CD8-positive, alpha-beta T cell (primary cell): ENCODE measurements at regions of chr6 and their contacts with region 1.

Region 1: DNA sequence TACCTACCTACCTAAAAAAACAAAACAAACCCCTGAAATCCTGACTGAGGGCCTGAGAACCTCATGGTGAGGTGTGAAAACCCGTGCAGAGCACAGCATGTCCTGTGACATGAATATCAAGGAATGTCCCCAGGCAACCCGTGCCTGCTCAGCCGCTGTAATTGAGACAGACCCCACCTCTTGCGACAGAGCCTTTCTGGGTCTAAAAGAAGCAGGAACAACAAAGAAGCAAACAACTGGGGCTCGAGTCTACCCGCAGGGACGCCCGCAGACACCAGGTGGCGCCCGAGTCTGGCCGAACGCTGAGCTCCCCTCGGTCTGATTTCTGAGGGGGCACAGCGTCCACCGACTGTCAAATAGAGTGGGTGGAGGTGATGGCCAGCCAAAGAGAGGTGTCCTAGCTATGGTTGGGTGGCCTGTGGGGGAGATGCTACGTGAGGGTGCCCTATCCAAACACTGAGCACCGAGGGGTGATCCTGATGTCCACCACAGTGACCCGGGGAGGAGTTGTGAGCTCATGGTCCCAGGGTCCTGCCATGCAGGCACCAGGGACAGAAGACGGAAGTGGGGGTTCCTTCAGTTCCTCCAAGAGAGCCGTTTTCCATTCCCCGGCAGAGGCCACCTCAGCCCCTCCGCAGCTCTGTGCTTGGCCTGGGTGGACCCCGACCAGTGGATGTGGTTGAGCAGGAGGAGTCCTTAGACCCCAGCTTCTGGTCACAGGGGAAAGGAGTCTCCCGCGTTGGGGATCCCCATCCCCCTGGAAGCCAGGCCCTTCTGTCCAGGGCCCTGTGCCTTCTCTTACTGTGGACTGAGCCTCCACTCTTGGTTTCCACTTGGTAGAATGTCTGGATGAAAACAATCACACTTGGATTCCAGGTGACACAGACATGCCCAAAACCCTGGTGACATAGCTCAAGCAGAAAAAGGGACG is 268.2 kb downstream of the CDC5L start:
- DNase-seq: peak; percentile 53 to 88 (median 77)
- ATAC-seq: peak; percentile 78
- H3K4me3 ChIP-seq: no peak overlapping the region
- H3K4me3 Mint-ChIP-seq: peak overlapping the region; percentile 20
- H3K27ac ChIP-seq: no peak overlapping the region
- H3K27ac Mint-ChIP-seq: peak overlapping the region; percentile 14
- H3K4me1 ChIP-seq: peaks cover 10% of the 10 kb centered on the region
- H3K4me1 Mint-ChIP-seq: peaks cover 7% of the 10 kb centered on the region
- H3K27me3 ChIP-seq: no peaks in the 10 kb centered on the region
- H3K27me3 Mint-ChIP-seq: peaks cover 5% of the 10 kb centered on the region
- CTCF ChIP-seq: peak; percentile 93

Region 2: DNA sequence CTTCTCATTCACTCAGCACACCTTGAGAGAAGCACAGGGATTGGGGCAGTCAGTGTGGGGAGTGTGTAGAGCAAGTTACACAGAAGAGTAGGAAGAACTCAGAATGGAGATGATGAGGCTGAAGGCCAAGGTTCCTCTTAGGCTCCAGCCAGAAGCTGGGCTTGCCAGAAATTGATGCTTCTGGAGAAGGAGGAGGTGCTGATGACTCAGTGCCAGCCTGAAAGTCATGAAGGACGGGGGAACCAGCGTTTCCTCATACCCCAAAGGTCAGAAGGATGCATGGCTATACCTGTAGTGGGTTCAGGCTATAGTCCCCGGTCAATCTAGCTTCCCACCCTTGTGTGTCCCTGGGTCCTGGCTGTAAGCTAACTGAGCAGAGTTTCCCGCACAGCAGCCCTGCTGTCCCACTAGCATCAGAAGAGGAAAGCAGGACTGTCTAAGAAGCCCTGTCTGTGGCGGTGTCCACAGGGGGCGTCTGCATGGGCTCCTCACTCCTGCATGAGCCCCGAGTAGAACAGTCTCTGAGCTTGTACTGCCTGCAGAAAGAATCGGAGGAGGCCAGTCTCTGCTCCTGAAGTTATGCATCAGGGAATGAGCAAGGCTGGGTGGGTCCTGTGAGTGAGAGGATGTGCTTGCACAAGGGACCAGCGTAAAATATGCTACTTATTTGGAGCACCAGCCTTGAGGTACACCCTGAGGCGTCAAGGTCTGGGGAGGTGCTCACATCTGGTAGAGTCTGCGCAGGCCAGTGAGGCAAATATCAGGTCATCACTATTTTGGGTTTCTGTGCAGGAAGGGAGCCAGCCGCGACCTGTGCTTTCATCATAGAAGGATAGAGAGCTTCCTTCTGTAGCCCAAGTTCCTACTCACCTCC is 677.0 kb before region 1 on chr6:
- CTCF ChIA-PET with region 1: no interaction called
- POLR2A ChIA-PET with region 1: no interaction called
- intact Hi-C with region 1: no loop called
- DNase-seq: peak in 1 of 9 experiments; percentile 29
- ATAC-seq: no peak
- H3K4me3 ChIP-seq: no peak overlapping the region
- H3K4me3 Mint-ChIP-seq: no peak overlapping the region
- H3K27ac ChIP-seq: no peak overlapping the region
- H3K27ac Mint-ChIP-seq: no peak overlapping the region
- H3K4me1 ChIP-seq: no peaks in the 10 kb centered on the region
- H3K4me1 Mint-ChIP-seq: no peaks in the 10 kb centered on the region
- H3K27me3 ChIP-seq: no peaks in the 10 kb centered on the region
- H3K27me3 Mint-ChIP-seq: peaks cover 12% of the 10 kb centered on the region
- CTCF ChIP-seq: no peak

Region 3: DNA sequence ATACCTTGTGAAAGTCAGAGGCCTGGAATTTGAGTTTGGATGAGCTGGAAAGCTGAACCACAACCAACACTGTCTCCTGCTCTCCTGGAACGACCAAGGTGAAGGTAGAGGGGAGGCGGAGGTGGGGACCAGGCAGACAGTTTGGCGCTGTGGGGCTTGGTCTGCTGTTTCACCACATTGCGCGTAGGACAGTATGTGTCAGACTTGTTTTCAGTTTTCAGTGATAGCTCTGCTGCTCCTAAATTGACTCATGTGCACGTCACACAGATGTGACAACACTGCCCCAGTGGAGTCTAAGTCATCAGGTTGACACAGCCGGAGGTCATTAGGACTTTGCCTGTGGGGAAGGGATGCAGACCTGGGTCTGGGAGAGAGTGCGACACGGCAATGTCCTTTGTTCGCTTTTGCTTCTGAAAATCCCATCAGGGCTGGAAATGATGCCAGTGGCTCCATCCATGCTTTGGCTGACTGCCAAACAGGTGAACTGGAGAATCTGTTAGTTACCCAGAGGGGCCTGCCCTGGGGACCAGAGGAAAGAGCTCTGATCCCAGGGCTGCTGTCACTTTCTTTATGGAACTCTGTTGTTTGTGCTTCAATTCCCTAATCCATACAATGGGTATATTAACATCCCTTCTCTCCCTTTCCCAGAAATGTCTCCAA is 12.7 kb before region 1 on chr6:
- CTCF ChIA-PET with region 1: interaction called, 27 read pairs
- POLR2A ChIA-PET with region 1: no interaction called
- intact Hi-C with region 1: no loop called
- DNase-seq: peak in 1 of 9 experiments; percentile 18
- ATAC-seq: peak; percentile 40
- H3K4me3 ChIP-seq: no peak overlapping the region
- H3K4me3 Mint-ChIP-seq: no peak overlapping the region
- H3K27ac ChIP-seq: no peak overlapping the region
- H3K27ac Mint-ChIP-seq: no peak overlapping the region
- H3K4me1 ChIP-seq: no peaks in the 10 kb centered on the region
- H3K4me1 Mint-ChIP-seq: no peaks in the 10 kb centered on the region
- H3K27me3 ChIP-seq: no peaks in the 10 kb centered on the region
- H3K27me3 Mint-ChIP-seq: no peaks in the 10 kb centered on the region
- CTCF ChIP-seq: no peak

Region 4: DNA sequence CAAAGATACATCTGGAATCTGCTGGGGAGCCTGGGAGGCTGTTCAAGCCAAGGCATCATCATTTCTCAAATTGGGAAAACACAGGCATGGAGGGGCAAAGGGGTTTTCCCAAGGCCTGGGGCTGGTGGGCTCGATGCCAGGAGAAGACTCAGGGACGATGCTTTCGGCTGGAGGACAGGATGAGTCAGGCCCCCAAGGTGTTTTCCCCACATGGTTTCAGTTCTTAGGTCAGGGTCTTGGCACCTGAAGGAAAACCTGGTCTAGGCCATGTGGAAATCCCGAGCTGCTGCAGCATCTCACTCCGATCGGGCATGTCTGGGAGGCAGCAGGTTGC is 79.9 kb after region 1 on chr6:
- CTCF ChIA-PET with region 1: no interaction called
- POLR2A ChIA-PET with region 1: no interaction called
- intact Hi-C with region 1: no loop called
- DNase-seq: no peak
- ATAC-seq: no peak
- H3K4me3 ChIP-seq: no peak overlapping the region
- H3K4me3 Mint-ChIP-seq: no peak overlapping the region
- H3K27ac ChIP-seq: no peak overlapping the region
- H3K27ac Mint-ChIP-seq: no peak overlapping the region
- H3K4me1 ChIP-seq: no peaks in the 10 kb centered on the region
- H3K4me1 Mint-ChIP-seq: no peaks in the 10 kb centered on the region
- H3K27me3 ChIP-seq: no peaks in the 10 kb centered on the region
- H3K27me3 Mint-ChIP-seq: no peaks in the 10 kb centered on the region
- CTCF ChIP-seq: no peak

Region 5: GRCh38 chr6:45327956-45328522 is 672.4 kb after region 1 on chr6 and contains the start of gene RUNX2:
- CTCF ChIA-PET with region 1: interaction called, 8 read pairs
- POLR2A ChIA-PET with region 1: no interaction called
- intact Hi-C with region 1: loop called (anchors 5 to 10 kb)
- DNase-seq: peak in 3 of 9 experiments; percentile 20 to 68 (median 33)
- ATAC-seq: peak; percentile 80
- H3K4me3 ChIP-seq: peak within 1 kb of the TSS; percentile 44 to 57
- H3K4me3 Mint-ChIP-seq: peak within 1 kb of the TSS; percentile 94
- H3K27ac ChIP-seq: peak within 1 kb of the TSS; percentile 51 to 57
- H3K27ac Mint-ChIP-seq: peak within 1 kb of the TSS; percentile 94
- H3K4me1 ChIP-seq: peaks cover 49% of the 10 kb centered on the region
- H3K4me1 Mint-ChIP-seq: peaks cover 85% of the 10 kb centered on the region
- H3K27me3 ChIP-seq: no peaks in the 10 kb centered on the region
- H3K27me3 Mint-ChIP-seq: no peaks in the 10 kb centered on the region
- CTCF ChIP-seq: no peak
- total RNA-seq, gene RUNX2: 11.7 to 13.8 TPM

Region 6: GRCh38 chr6:45599053-45599452 is 943.4 kb after region 1 on chr6:
- CTCF ChIA-PET with region 1: no interaction called
- POLR2A ChIA-PET with region 1: no interaction called
- intact Hi-C with region 1: no loop called
- DNase-seq: no peak
- ATAC-seq: no peak
- H3K4me3 ChIP-seq: no peak overlapping the region
- H3K4me3 Mint-ChIP-seq: no peak overlapping the region
- H3K27ac ChIP-seq: no peak overlapping the region
- H3K27ac Mint-ChIP-seq: no peak overlapping the region
- H3K4me1 ChIP-seq: no peaks in the 10 kb centered on the region
- H3K4me1 Mint-ChIP-seq: peaks cover 6% of the 10 kb centered on the region
- H3K27me3 ChIP-seq: no peaks in the 10 kb centered on the region
- H3K27me3 Mint-ChIP-seq: no peaks in the 10 kb centered on the region
- CTCF ChIP-seq: no peak

Region 7: GRCh38 chr6:45724511-45724910 is 1068.8 kb after region 1 on chr6:
- CTCF ChIA-PET with region 1: interaction called, 26 read pairs
- POLR2A ChIA-PET with region 1: no interaction called
- intact Hi-C with region 1: no loop called
- DNase-seq: no peak
- ATAC-seq: no peak
- H3K4me3 ChIP-seq: no peak overlapping the region
- H3K4me3 Mint-ChIP-seq: no peak overlapping the region
- H3K27ac ChIP-seq: no peak overlapping the region
- H3K27ac Mint-ChIP-seq: no peak overlapping the region
- H3K4me1 ChIP-seq: no peaks in the 10 kb centered on the region
- H3K4me1 Mint-ChIP-seq: no peaks in the 10 kb centered on the region
- H3K27me3 ChIP-seq: no peaks in the 10 kb centered on the region
- H3K27me3 Mint-ChIP-seq: no peaks in the 10 kb centered on the region
- CTCF ChIP-seq: no peak

Region 8: GRCh38 chr6:45922728-45923351 is 1267.2 kb after region 1 on chr6:
- CTCF ChIA-PET with region 1: interaction called, 47 read pairs
- POLR2A ChIA-PET with region 1: no interaction called
- intact Hi-C with region 1: loop called in 1 of 2 experiments (anchors 1 kb)
- DNase-seq: peak; percentile 22 to 70 (median 51)
- ATAC-seq: no peak
- H3K4me3 ChIP-seq: no peak overlapping the region
- H3K4me3 Mint-ChIP-seq: no peak overlapping the region
- H3K27ac ChIP-seq: no peak overlapping the region
- H3K27ac Mint-ChIP-seq: no peak overlapping the region
- H3K4me1 ChIP-seq: no peaks in the 10 kb centered on the region
- H3K4me1 Mint-ChIP-seq: peaks cover 4% of the 10 kb centered on the region
- H3K27me3 ChIP-seq: no peaks in the 10 kb centered on the region
- H3K27me3 Mint-ChIP-seq: no peaks in the 10 kb centered on the region
- CTCF ChIP-seq: peak; percentile 38